Left ventricle myocardium superior (tissue), 1 donor: ENCODE measurements at regions of chr11 and their contacts with region 1.

Region 1: GRCh38 chr11:17063171-17064002 is 14.1 kb downstream of the RPS13 start:
- DNase-seq: peak; percentile 81
- ATAC-seq: peak; percentile 92

Region 2: GRCh38 chr11:16785520-16786128 is 277.8 kb before region 1 on chr11:
- intact Hi-C with region 1: loop called (anchors 5 kb)
- DNase-seq: peak; percentile 58
- ATAC-seq: peak; percentile 80

Region 3: GRCh38 chr11:16945671-16946469 is 117.5 kb before region 1 on chr11:
- intact Hi-C with region 1: loop called (anchors 5 kb)
- DNase-seq: peak; percentile 55
- ATAC-seq: peak; percentile 91